PC-3 (cell line): ENCODE measurements at regions of chr1 and their contacts with region 1.

Region 1: GRCh38 chr1:197692965-197693364 is 82.3 kb downstream of the DENND1B start:
- DNase-seq: peak; percentile 29
- ATAC-seq: peak; percentile 64
- H3K4me3 ChIP-seq: no peak overlapping the region
- H3K27ac ChIP-seq: no peak overlapping the region
- H3K4me1 ChIP-seq: peaks cover 12% of the 10 kb centered on the region
- H3K27me3 ChIP-seq: no peaks in the 10 kb centered on the region
- CTCF ChIP-seq: peak; percentile 56

Region 2: GRCh38 chr1:197677752-197678295 is 15.1 kb before region 1 on chr1:
- CTCF ChIA-PET with region 1: no interaction called
- POLR2A ChIA-PET with region 1: no interaction called
- intact Hi-C with region 1: no loop called
- DNase-seq: no peak
- ATAC-seq: no peak
- H3K4me3 ChIP-seq: no peak overlapping the region
- H3K27ac ChIP-seq: no peak overlapping the region
- H3K4me1 ChIP-seq: no peaks in the 10 kb centered on the region
- H3K27me3 ChIP-seq: no peaks in the 10 kb centered on the region
- CTCF ChIP-seq: no peak

Region 3: GRCh38 chr1:197783510-197783948 is 90.6 kb after region 1 on chr1:
- CTCF ChIA-PET with region 1: no interaction called
- POLR2A ChIA-PET with region 1: no interaction called
- intact Hi-C with region 1: loop called (anchors 5 kb)
- DNase-seq: peak; percentile 93
- ATAC-seq: peak; percentile 89
- H3K4me3 ChIP-seq: no peak overlapping the region
- H3K27ac ChIP-seq: peak overlapping the region; percentile 98
- H3K4me1 ChIP-seq: peaks cover 53% of the 10 kb centered on the region
- H3K27me3 ChIP-seq: no peaks in the 10 kb centered on the region
- CTCF ChIP-seq: no peak

Region 4: DNA sequence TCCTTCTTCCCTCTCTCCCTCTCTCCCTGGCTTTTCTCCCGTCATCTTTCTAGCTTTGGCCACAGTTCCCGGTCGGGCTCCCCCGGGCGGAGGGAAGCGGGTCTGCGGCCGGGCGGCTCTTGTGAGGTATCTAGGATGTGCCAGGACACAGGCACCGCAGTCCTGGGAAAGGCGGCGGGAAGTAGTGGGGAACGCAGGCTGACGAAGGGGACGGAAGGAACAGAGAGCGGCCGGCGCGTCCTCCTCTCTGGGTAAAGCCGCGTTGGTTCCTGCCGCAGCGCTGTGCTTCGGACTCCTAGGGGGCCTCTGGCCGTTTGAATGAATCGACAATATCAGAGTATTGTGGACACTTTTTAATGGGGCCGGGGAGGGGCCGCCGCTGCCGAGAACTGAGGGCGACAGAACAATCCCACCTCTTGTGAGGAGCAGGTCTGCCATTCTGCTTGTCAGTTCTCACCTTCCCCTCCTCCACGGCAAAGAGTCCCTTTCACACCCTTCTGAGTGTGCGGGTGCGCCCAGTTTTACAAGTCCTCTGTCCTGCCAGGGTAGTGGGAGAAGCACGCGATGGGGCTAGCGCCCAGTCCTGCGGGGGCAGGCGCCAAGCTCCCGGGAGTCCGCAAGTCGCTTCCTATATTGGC is 223.0 kb after region 1 on chr1:
- CTCF ChIA-PET with region 1: interaction called, 3 read pairs
- POLR2A ChIA-PET with region 1: no interaction called
- intact Hi-C with region 1: loop called (anchors 2 kb)
- DNase-seq: peak; percentile 79
- ATAC-seq: peak; percentile 83
- H3K4me3 ChIP-seq: peak overlapping the region; percentile 81
- H3K27ac ChIP-seq: no peak overlapping the region
- H3K4me1 ChIP-seq: peaks cover 4% of the 10 kb centered on the region; the same call in 1 of the 2 replicates
- H3K27me3 ChIP-seq: no peaks in the 10 kb centered on the region
- CTCF ChIP-seq: peak; percentile 70

Region 5: DNA sequence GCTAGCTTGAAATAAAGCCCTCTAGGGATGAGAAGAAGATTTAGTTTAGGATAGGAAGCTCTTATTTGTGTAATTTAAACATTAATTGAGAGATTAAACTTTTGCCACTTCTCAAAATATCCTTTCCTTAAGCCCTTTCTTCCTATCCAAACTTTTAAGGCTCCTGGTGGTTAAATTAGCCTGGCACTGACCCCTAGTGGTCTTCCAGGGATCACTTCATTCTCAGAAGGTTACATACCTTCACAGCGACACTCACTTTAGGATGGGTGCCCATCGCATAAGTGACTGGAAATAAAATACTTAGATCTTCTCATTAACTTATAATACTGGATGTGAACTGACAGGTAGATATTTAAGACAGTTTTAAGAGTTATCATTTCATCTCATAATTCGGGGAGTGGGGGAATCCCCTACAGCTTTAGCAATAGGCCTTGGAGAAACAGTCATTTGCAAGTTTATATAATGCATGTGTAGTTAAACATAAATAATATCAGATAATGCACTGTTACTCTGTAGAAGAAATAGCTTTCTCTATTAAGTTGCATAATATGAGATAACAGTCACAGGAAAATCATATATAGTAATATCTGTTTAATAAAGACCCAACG is 231.7 kb after region 1 on chr1:
- CTCF ChIA-PET with region 1: no interaction called
- POLR2A ChIA-PET with region 1: no interaction called
- intact Hi-C with region 1: loop called (anchors 1 kb)
- DNase-seq: peak; percentile 68
- ATAC-seq: peak; percentile 76
- H3K4me3 ChIP-seq: no peak overlapping the region
- H3K27ac ChIP-seq: no peak overlapping the region
- H3K4me1 ChIP-seq: no peaks in the 10 kb centered on the region
- H3K27me3 ChIP-seq: no peaks in the 10 kb centered on the region
- CTCF ChIP-seq: peak; percentile 72

Region 6: GRCh38 chr1:198298640-198299039 is 605.7 kb after region 1 on chr1:
- CTCF ChIA-PET with region 1: no interaction called
- POLR2A ChIA-PET with region 1: no interaction called
- intact Hi-C with region 1: no loop called
- DNase-seq: no peak
- ATAC-seq: no peak
- H3K4me3 ChIP-seq: no peak overlapping the region
- H3K27ac ChIP-seq: no peak overlapping the region
- H3K4me1 ChIP-seq: no peaks in the 10 kb centered on the region
- H3K27me3 ChIP-seq: no peaks in the 10 kb centered on the region
- CTCF ChIP-seq: no peak